Psoas muscle (tissue), 8 donors: ENCODE measurements at regions of chr18 and their contacts with region 1.

Region 1: GRCh38 chr18:62714671-62715435 is 488 bp upstream of the PHLPP1 start:
- DNase-seq: peak; percentile 100
- ATAC-seq: peak; percentile 96 to 99 (median 98)
- H3K4me3 ChIP-seq: peak overlapping the region; percentile 79
- H3K27ac ChIP-seq: peak overlapping the region; percentile 88
- H3K4me1 ChIP-seq: peaks cover 22% of the 10 kb centered on the region
- H3K27me3 ChIP-seq: no peaks in the 10 kb centered on the region
- CTCF ChIP-seq: peak; percentile 77

Region 2: GRCh38 chr18:62522504-62523254 is 192.2 kb before region 1 on chr18 and contains the start of gene ZCCHC2:
- intact Hi-C with region 1: loop called in 1 of 2 experiments (anchors 5 kb)
- DNase-seq: peak; percentile 98 to 99
- ATAC-seq: peak; percentile 78 to 87 (median 80)
- H3K4me3 ChIP-seq: peak within 1 kb of the TSS; percentile 95
- H3K27ac ChIP-seq: peak within 1 kb of the TSS; percentile 99
- H3K4me1 ChIP-seq: peaks cover 24% of the 10 kb centered on the region
- H3K27me3 ChIP-seq: no peaks in the 10 kb centered on the region
- CTCF ChIP-seq: no peak
- total RNA-seq, gene ZCCHC2: 19.4 to 38.2 (median 32.1) TPM

Region 3: GRCh38 chr18:62596145-62597005 is 118.5 kb before region 1 on chr18:
- intact Hi-C with region 1: loop called in 1 of 2 experiments (anchors 10 kb)
- DNase-seq: peak in 1 of 2 donors; percentile 30
- ATAC-seq: peak; percentile 36 to 54 (median 47)
- H3K4me3 ChIP-seq: peak overlapping the region; percentile 59
- H3K27ac ChIP-seq: no peak overlapping the region
- H3K4me1 ChIP-seq: peaks cover 8% of the 10 kb centered on the region
- H3K27me3 ChIP-seq: peaks cover 0 to 58% (median 15%) of the 10 kb centered on the region in 3 donors
- CTCF ChIP-seq: no peak

Region 4: GRCh38 chr18:62610701-62611411 is 104.0 kb before region 1 on chr18:
- intact Hi-C with region 1: no loop called
- DNase-seq: no peak
- ATAC-seq: peak in 3 of 4 donors; percentile 10 to 45 (median 37)
- H3K4me3 ChIP-seq: peak overlapping the region; percentile 46
- H3K27ac ChIP-seq: no peak overlapping the region
- H3K4me1 ChIP-seq: peaks cover 5% of the 10 kb centered on the region
- H3K27me3 ChIP-seq: peaks cover 0 to 18% (median 2%) of the 10 kb centered on the region in 3 donors
- CTCF ChIP-seq: no peak

Region 5: GRCh38 chr18:62663731-62664336 is 51.0 kb before region 1 on chr18:
- intact Hi-C with region 1: no loop called
- DNase-seq: no peak
- ATAC-seq: no peak
- H3K4me3 ChIP-seq: no peak overlapping the region
- H3K27ac ChIP-seq: no peak overlapping the region
- H3K4me1 ChIP-seq: no peaks in the 10 kb centered on the region
- H3K27me3 ChIP-seq: no peaks in the 10 kb centered on the region
- CTCF ChIP-seq: no peak

Region 6: DNA sequence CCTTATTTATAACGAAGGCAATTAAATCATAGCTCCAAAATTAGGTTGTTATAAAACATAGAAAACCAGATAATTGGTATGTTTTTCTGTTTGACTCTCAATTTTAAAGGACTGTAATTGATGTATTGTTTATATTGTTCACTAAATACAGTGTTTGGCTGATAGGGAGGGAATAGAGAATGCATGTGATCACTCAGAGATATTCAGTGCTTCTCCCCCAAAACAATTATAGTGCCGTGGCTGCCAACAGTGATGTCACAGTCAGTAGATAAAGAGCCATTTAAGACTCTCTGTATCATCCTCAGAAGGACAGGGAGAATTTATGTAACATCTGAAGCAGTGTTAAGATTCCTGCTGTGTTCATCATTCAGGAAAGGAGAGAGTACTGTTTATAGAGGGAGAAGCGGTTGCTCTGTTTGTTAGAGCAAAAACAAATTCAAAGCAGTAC is 70.1 kb after region 1 on chr18:
- intact Hi-C with region 1: no loop called
- DNase-seq: peak in 1 of 2 donors; percentile 15
- ATAC-seq: no peak
- H3K4me3 ChIP-seq: no peak overlapping the region
- H3K27ac ChIP-seq: no peak overlapping the region
- H3K4me1 ChIP-seq: peaks cover 8% of the 10 kb centered on the region
- H3K27me3 ChIP-seq: no peaks in the 10 kb centered on the region
- CTCF ChIP-seq: no peak

Region 7: DNA sequence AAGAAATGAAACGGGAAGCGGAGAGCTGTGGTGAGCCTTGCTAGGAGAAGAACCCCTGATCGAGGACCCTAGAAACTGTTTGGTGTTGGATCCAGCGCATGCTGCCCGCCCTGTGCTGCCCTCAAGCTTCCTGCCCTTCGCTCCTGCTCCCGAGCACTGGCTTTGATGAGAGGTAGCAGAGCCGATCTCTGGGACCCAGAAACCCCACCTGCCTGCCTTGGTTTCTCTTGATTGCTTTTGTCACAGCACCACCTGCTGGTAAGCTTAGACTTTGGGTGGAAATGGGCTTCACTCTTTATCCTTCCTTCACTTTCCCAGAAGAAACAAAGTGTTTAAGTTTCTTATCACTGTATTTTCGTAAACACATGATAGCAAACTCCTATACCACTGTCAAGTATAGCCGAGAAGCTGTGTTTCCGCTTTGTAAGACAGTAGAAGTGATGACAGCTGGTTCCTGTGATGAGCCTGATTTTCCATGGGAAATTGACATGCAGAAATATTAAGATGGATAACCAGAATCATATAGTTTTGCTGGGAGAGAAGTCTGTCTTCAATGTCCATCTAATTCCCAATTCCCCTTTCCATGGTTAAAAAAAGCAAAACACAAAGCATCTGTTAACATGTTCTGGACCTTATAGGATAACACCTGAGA is 267.9 kb after region 1 on chr18:
- intact Hi-C with region 1: loop called (anchors 1 to 5 kb)
- DNase-seq: no peak
- ATAC-seq: peak; percentile 58 to 84 (median 70)
- H3K4me3 ChIP-seq: peak overlapping the region; percentile 40
- H3K27ac ChIP-seq: no peak overlapping the region
- H3K4me1 ChIP-seq: no peaks in the 10 kb centered on the region
- H3K27me3 ChIP-seq: no peaks in the 10 kb centered on the region
- CTCF ChIP-seq: peak; percentile 79